Gastrocnemius medialis (tissue), 4 donors: ENCODE measurements at regions of chr1 and their contacts with region 1.

Region 1: GRCh38 chr1:54950369-54951163 is 29.9 kb upstream of the TMEM61 start:
- DNase-seq: peak; percentile 35 to 66
- ATAC-seq: peak; percentile 94 to 95
- H3K4me3 ChIP-seq: peak overlapping the region in 3 of 4 donors; percentile 35 to 48 (median 39)
- H3K27ac ChIP-seq: peak overlapping the region; percentile 23 to 75 (median 61)
- H3K4me1 ChIP-seq: peaks cover 5 to 7% of the 10 kb centered on the region in 2 donors
- H3K27me3 ChIP-seq: no peaks in the 10 kb centered on the region
- CTCF ChIP-seq: peak; percentile 51 to 88 (median 79)
- POLR2A ChIP-seq: no peak

Region 2: GRCh38 chr1:54989968-54990810 is 39.6 kb after region 1 on chr1:
- in situ Hi-C with region 1: loop called (anchors 5 kb)
- intact Hi-C with region 1: no loop called
- DNase-seq: no peak
- ATAC-seq: no peak
- H3K4me3 ChIP-seq: no peak overlapping the region
- H3K27ac ChIP-seq: no peak overlapping the region
- H3K4me1 ChIP-seq: no peaks in the 10 kb centered on the region
- H3K27me3 ChIP-seq: peaks cover 0 to 2% (median 0%) of the 10 kb centered on the region in 3 donors
- CTCF ChIP-seq: no peak
- POLR2A ChIP-seq: no peak

Region 3: GRCh38 chr1:55021965-55022546 is 71.5 kb after region 1 on chr1:
- in situ Hi-C with region 1: no loop called
- intact Hi-C with region 1: loop called (anchors 1 kb)
- DNase-seq: peak; percentile 52 to 79
- ATAC-seq: peak; percentile 92 to 97
- H3K4me3 ChIP-seq: no peak overlapping the region
- H3K27ac ChIP-seq: no peak overlapping the region
- H3K4me1 ChIP-seq: no peaks in the 10 kb centered on the region
- H3K27me3 ChIP-seq: no peaks in the 10 kb centered on the region
- CTCF ChIP-seq: peak; percentile 63 to 86 (median 76)
- POLR2A ChIP-seq: no peak